ENCODE measurements at regions of chr18 and their contacts with region 1.

Region 1: GRCh38 chr18:9210966-9211365 is 74.4 kb downstream of the ANKRD12 start:
- DNase-seq: no peak
- H3K4me3 ChIP-seq: no peak overlapping the region
- H3K27ac ChIP-seq: no peak overlapping the region
- H3K4me1 ChIP-seq: no peaks in the 10 kb centered on the region
- H3K27me3 ChIP-seq: no peaks in the 10 kb centered on the region
- CTCF ChIP-seq: no peak

Region 2: GRCh38 chr18:9117980-9118841 is 92.8 kb before region 1 on chr18:
- CTCF ChIA-PET with region 1: no interaction called
- POLR2A ChIA-PET with region 1: interaction called, 18 read pairs
- intact Hi-C with region 1: no loop called
- DNase-seq: no peak
- H3K4me3 ChIP-seq: no peak overlapping the region
- H3K27ac ChIP-seq: peak overlapping the region; percentile 85; the same call in 1 of the 2 replicates
- H3K4me1 ChIP-seq: peaks cover 29% of the 10 kb centered on the region
- H3K27me3 ChIP-seq: no peaks in the 10 kb centered on the region
- CTCF ChIP-seq: no peak

Measured in PC-9 (cell line).